ENCODE measurements at regions of chr16 and their contacts with region 1.

Region 1: DNA sequence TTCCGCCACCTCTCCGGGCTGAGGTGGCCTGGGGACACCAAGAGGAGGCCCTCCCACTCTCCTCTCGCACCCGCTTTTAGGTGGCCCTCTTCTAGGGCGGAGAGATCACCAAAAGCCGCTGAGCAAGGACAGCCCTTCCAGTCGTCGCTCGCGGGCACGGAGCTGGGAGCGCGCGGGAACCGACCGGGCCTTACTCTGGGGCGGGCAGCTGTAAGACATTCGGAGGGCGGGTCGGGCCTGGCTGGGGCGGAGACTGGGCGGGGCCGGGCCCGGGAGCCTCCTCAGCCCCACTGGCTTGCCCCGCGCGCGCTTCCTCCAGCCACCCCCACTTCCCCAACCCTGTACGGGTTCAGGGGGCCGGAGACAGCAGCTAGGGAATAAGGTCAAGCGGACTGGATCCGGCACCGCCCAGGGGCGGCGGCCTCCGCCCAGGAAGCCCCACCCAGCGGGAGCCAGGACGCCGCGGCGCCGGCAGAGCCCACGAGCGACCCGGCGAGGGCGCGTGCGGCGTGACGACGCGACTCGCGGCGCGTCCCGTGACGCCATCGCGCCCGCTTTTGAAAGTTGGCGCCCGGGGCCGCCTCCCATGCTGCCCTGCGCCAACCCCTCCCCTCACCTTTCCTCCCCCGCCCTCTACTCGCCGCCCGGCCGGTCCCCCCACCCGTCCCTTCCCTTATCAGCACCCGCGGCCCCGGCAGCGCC is 351 bp upstream of the CTCF start:
- H3K4me3 Mint-ChIP-seq: peak overlapping the region; percentile 77
- H3K27ac Mint-ChIP-seq: peak overlapping the region; percentile 95
- H3K4me1 Mint-ChIP-seq: peaks cover 32% of the 10 kb centered on the region
- H3K27me3 Mint-ChIP-seq: no peaks in the 10 kb centered on the region

Region 2: GRCh38 chr16:67120025-67120424 is 441.9 kb before region 1 on chr16:
- intact Hi-C with region 1: no loop called
- H3K4me3 Mint-ChIP-seq: no peak overlapping the region
- H3K27ac Mint-ChIP-seq: no peak overlapping the region
- H3K4me1 Mint-ChIP-seq: peaks cover 26% of the 10 kb centered on the region
- H3K27me3 Mint-ChIP-seq: no peaks in the 10 kb centered on the region

Region 3: GRCh38 chr16:67415872-67416793 is 145.8 kb before region 1 on chr16 and contains the start of gene ZDHHC1:
- intact Hi-C with region 1: no loop called
- H3K4me3 Mint-ChIP-seq: peak within 1 kb of the TSS; percentile 75
- H3K27ac Mint-ChIP-seq: peak within 1 kb of the TSS; percentile 72
- H3K4me1 Mint-ChIP-seq: peaks cover 24% of the 10 kb centered on the region
- H3K27me3 Mint-ChIP-seq: peaks cover 47% of the 10 kb centered on the region

Region 4: GRCh38 chr16:67521095-67521804 is 40.7 kb before region 1 on chr16:
- intact Hi-C with region 1: loop called (anchors 1 kb)
- H3K4me3 Mint-ChIP-seq: peak overlapping the region; percentile 84
- H3K27ac Mint-ChIP-seq: peak overlapping the region; percentile 99
- H3K4me1 Mint-ChIP-seq: peaks cover 68% of the 10 kb centered on the region
- H3K27me3 Mint-ChIP-seq: peaks cover 27% of the 10 kb centered on the region

Region 5: GRCh38 chr16:67530013-67530939 is 31.7 kb before region 1 on chr16:
- intact Hi-C with region 1: loop called (anchors 2 kb)
- H3K4me3 Mint-ChIP-seq: peak overlapping the region; percentile 81
- H3K27ac Mint-ChIP-seq: peak overlapping the region; percentile 96
- H3K4me1 Mint-ChIP-seq: peaks cover 45% of the 10 kb centered on the region
- H3K27me3 Mint-ChIP-seq: peaks cover 22% of the 10 kb centered on the region

Region 6: DNA sequence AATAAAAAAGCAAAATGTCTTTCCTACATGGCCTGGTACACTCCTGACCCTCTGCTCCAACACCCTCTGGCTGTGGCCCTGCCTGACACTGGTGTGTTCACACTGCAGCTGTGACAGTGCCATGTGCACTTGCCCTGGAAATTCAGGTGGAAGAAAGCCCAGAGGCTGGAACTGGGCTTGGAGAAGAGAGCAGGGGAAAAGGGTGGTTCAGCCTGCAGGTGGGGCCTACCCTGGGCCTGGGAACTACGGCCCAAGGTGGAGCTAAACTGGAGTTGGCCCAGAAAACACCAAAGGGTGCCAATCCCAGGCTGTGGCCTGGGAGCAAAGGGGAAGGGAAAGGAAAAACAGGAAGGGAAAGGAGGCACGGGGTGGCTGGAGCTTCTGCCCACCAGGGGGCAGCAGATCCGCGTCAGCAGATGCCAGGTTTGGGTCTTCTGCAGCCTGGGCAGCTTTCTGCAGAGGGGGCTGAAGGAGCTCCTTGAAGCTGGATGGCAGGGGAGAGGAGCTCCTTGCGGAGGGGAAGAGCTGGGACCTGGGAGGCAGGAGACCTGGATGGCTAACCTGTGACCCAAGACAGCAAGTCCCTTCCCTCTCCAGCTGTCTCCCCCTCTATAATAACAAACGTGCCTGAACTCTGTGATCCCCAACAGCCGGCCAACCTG is 15.1 kb before region 1 on chr16:
- intact Hi-C with region 1: loop called (anchors 1 kb)
- H3K4me3 Mint-ChIP-seq: no peak overlapping the region
- H3K27ac Mint-ChIP-seq: peak overlapping the region; percentile 15
- H3K4me1 Mint-ChIP-seq: peaks cover 71% of the 10 kb centered on the region
- H3K27me3 Mint-ChIP-seq: no peaks in the 10 kb centered on the region

Region 7: DNA sequence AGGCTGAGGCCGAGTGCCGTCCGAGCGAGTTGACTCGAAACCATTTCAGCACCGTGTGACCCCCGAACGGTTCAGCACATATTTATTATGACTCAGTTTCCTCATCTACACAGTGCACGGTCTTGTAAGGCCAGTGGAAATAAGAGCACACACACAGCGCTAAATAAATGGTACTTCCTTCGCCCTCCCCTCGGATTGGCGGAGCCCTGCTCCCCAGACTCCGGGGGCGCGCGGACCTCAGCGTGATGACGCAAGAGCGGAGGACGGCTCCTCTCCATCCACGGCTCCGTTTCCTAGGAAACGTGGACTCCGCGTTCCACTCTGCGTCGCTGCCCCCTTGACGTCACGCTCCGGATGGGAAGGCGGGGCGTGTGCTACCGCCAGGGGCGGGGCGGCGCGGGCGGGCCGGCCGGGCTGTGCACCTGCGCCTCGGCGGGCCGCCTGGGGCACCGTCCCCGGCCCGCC is 98.6 kb after region 1 on chr16 and contains the start of gene PARD6A:
- intact Hi-C with region 1: loop called (anchors 1 kb)
- H3K4me3 Mint-ChIP-seq: peak within 1 kb of the TSS; percentile 93
- H3K27ac Mint-ChIP-seq: peak within 1 kb of the TSS; percentile 89
- H3K4me1 Mint-ChIP-seq: peaks cover 37% of the 10 kb centered on the region
- H3K27me3 Mint-ChIP-seq: peaks cover 11% of the 10 kb centered on the region

Region 8: DNA sequence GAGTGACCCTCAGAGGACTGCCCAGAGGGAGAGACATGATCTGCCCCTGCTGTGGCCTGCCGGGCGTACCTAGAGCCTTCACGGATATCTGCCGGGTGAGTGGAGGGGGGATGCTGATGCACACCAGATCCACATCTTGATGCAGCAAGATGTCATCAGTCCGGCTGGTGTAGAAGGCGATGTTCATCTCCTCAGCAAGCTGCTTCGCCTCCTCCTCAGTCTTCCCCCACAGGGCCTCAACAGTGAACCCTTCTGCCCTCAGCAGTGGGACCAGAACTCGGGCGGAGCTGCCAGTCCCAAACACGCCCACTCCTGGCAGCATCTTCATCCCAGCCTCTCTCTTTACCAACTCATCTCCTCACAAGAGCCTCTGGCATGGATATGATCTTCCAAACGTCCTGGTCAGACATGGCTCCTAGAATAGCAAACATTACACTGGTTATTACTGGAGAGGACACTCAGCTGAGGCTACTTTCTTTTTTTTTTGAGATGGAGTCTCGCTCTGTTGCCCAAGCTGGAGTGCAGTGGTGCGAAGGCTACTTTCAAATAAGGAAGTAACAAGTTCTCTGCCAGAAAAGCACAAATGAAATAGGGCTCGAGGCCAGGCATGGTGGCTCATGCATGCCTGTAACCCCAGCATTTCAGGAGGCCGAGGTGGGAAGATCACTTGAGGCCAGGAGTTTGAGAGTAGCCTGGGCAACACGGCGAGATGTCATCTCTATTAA is 123.6 kb after region 1 on chr16:
- intact Hi-C with region 1: no loop called
- H3K4me3 Mint-ChIP-seq: no peak overlapping the region
- H3K27ac Mint-ChIP-seq: no peak overlapping the region
- H3K4me1 Mint-ChIP-seq: peaks cover 6% of the 10 kb centered on the region
- H3K27me3 Mint-ChIP-seq: no peaks in the 10 kb centered on the region

Region 9: DNA sequence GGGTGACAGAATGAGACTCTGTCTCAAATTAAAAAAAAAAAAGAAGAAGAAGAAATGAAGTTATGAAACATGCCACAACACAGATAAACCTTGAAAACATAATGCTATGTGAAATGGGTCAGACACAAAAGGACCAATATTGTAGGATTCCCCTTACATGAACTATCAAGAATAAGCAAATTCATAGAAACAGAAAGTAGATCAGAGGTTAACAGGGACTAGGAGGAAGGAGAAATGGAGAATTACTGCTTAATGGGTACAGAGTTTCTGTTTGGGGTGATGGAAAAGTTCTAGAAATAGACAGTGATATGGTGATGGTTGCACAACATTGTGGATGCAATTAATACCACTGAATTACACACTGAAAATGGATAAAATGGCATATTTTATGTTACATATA is 228.1 kb after region 1 on chr16:
- intact Hi-C with region 1: no loop called
- H3K4me3 Mint-ChIP-seq: no peak overlapping the region
- H3K27ac Mint-ChIP-seq: no peak overlapping the region
- H3K4me1 Mint-ChIP-seq: peaks cover 15% of the 10 kb centered on the region
- H3K27me3 Mint-ChIP-seq: no peaks in the 10 kb centered on the region

Measured in dendritic cell treated with granulocyte-macrophage colony-stimulating factor and Interleukin-4, amounts not matched to agents 40 ng/mL and 50 ng/mL, for 4 days (primary cell).